ENCODE measurements at regions of chr20 and their contacts with region 1.

Region 1: DNA sequence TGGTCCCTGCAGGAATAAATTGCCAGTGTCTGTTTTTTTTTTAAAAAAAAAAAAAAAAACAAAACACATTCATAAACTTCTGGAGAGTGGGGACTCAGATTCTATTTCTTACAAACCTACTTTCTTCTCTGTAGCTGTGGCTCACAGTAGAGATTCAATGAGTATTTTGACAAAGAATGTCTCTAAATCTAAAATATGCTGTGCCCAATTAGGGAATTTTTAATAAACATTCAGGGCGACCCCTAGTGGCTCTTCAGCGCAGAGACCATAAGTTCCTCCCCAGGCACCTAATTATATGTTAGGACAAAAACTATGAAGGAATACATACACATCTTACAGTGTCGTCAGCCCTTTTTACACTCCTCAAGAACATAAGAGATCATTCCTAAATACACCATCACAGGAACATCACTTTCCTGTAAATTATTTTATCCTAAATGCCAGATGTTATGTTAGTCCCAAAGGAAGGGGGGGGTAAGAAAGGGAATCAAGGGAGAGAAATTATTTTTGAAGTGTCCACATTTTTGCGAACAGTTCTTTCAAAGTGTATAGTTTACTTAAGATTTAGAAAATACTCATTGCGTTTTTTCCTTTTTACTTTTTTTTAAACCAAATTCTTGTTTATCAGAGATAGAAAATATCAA is 21.8 kb upstream of the NAA20 start:
- DNase-seq: peak in 1 of 2 donors; percentile 39
- ATAC-seq: peak; percentile 54

Region 2: GRCh38 chr20:19692685-19693119 is 302.6 kb before region 1 on chr20:
- intact Hi-C with region 1: loop called in 1 of 2 experiments (anchors 10 kb)
- DNase-seq: peak in 1 of 2 donors; percentile 68
- ATAC-seq: peak; percentile 49

Region 3: DNA sequence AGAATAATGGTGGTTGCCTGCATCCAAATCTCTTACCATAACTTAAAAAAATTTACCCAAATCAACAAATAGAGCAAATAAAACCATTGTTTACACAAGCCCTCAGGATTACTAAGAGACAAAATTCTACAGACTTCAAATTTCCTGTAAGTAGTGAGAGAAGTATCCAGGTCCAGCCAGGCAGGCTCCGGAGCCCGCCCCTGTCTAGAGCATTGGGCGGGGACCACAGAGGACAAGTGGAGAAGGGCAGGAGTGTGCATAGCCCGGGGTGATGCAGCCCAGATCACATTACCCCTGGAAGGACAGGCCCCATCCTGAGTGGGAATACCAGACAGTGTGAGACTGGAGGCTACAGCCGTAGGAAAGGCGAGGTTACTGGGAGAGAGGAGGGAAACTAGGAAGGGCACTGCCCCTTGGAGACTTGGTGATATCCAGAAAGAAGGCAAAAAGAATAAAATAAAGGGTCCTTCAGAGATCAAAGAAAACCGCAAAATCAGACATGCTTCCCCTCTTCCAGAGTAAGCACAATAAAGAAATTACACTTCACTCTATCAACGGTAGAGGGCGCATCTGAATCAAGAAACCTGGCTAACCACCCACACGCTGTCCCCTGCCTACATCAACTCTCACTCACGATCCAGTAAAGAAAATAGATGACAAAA is 210.7 kb before region 1 on chr20:
- intact Hi-C with region 1: loop called in 1 of 2 experiments (anchors 2 kb)
- DNase-seq: peak; percentile 41 to 47
- ATAC-seq: peak; percentile 80

Region 4: GRCh38 chr20:19794941-19795340 is 200.4 kb before region 1 on chr20:
- intact Hi-C with region 1: loop called in 1 of 2 experiments (anchors 10 kb)
- DNase-seq: no peak
- ATAC-seq: no peak

Region 5: DNA sequence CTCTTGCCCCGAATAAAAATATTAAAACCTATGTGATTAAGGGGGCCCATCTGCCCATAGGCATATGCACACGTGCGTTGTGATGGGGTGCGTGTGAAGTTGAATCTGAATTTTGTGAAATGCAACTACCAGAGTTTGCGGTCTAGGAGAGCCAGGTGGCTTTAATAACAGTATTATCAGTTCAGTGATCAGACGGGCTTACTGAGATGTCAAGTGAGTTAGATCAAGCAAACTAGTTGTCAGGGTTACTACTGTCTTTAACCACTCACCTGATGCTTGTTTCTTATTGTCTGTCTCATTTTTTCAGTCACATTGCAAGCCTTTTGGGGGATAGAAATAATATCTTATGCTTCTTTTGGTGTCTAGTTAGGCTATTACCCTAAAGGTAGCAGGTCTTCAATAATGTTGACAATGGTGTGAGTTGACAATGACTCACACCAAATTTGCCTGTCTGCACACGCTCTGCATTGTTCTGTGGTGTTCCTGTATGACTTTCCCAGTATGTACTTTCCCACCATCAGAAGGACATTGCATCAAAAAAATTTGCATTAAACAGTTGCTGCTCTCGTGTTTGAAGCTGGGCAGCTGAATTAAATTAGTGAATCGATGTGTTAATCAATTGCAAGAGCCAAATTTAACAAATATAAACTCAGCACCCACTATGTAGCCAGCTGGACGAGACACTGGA is 81.3 kb before region 1 on chr20:
- intact Hi-C with region 1: no loop called
- DNase-seq: no peak
- ATAC-seq: no peak

Region 6: GRCh38 chr20:19928328-19929011 is 66.9 kb before region 1 on chr20:
- intact Hi-C with region 1: no loop called
- DNase-seq: peak; percentile 65 to 75
- ATAC-seq: peak; percentile 93